ENCODE measurements at regions of chr20 and their contacts with region 1.

Region 1: GRCh38 chr20:53915446-53916172 is 154.8 kb downstream of the BCAS1 start:
- DNase-seq: peak; percentile 64
- H3K4me3 ChIP-seq: peak overlapping the region; percentile 41
- H3K27me3 ChIP-seq: no peaks in the 10 kb centered on the region
- CTCF ChIP-seq: peak; percentile 88

Region 2: GRCh38 chr20:53578492-53579222 is 337.0 kb before region 1 on chr20:
- CTCF ChIA-PET with region 1: interaction called, 23 read pairs
- POLR2A ChIA-PET with region 1: no interaction called
- DNase-seq: peak; percentile 48
- H3K4me3 ChIP-seq: 0 out of 2 replicates have a peak overlapping the region, but pooled peaks have one; percentile 15
- H3K27me3 ChIP-seq: no peaks in the 10 kb centered on the region
- CTCF ChIP-seq: peak; percentile 72

Region 3: GRCh38 chr20:53773792-53774401 is 141.7 kb before region 1 on chr20:
- CTCF ChIA-PET with region 1: interaction called, 16 read pairs
- POLR2A ChIA-PET with region 1: no interaction called
- DNase-seq: peak; percentile 99
- H3K4me3 ChIP-seq: no peak overlapping the region
- H3K27me3 ChIP-seq: no peaks in the 10 kb centered on the region
- CTCF ChIP-seq: no peak

Region 4: DNA sequence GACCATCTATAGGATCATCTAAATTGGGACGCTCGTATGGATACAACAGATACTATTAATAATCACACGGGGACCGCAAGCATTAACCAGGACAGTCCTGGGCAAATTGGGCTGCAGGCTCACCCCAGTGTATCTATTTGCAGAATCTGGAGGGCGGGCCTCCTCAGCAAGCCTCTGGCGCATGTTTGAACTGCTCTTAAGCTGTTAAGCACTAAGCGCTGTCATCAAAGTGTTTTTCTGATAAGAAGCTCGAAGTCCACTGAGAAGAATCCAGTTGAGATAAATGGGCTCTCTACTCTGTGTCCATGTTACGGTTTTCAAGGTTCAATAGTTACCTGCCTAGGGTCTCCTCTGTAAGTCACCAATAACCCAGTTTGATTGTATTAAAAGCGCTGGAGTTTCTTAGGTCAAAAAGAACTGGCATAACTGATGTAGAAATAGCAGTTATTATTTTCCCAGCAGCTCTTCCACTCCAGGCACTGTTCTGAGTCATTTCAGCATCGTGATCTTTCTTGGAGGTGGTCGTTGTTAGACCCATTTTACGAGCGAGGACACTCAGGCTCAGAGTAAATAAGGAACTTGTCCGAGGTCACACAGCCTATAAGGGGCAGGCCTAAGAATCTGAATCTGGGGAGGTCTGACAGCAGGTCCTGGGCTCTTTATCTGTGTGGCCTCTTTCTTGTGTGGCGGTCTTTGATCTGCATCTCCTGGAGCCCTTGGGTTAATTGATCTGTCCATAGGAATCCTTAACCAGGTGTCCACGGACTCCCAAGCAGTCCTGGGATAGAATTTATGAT is 114.6 kb before region 1 on chr20:
- CTCF ChIA-PET with region 1: no interaction called
- POLR2A ChIA-PET with region 1: no interaction called
- DNase-seq: no peak
- H3K4me3 ChIP-seq: no peak overlapping the region
- H3K27me3 ChIP-seq: no peaks in the 10 kb centered on the region
- CTCF ChIP-seq: no peak

Region 5: DNA sequence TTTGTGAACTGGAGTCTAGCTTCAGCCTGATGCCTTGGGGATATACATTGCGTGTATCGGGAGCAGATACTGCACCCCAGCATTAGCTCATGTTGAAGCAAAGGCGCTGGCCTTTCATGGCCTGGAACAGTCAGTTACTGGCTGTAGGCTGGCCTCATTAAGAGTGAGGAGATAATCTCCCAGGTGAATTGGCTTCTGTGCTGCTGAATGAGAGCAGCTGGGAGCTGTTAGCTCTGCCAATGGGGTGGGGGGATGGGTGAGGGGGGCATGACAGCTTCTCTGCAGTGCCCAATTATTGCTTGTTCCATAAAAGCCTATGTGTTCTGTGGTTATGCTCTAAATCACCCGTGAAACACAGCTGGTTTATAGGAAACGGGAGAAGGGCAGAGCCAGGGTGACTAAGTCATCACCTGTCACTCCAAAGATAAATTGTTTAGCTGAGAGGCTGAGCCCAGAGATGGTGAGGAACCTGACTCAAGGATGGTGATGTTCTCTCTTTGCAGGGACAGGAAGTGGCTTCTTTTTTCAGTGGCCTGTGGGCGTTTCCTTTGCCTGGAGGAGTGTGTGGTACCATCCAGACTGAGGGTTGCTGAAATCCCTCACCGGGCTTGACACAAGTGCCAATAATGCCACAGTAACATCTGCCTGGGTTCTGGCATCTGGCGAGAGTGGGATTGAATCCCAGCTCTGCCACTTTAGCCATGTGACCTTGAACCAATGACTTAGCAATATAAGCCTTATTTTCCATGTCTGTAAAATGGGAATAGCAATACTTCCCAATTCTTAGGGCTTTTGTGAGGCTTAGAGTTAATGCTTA is 16.1 kb before region 1 on chr20:
- CTCF ChIA-PET with region 1: interaction called, 11 read pairs
- POLR2A ChIA-PET with region 1: interaction called, 6 read pairs
- DNase-seq: no peak
- H3K4me3 ChIP-seq: no peak overlapping the region
- H3K27me3 ChIP-seq: no peaks in the 10 kb centered on the region
- CTCF ChIP-seq: no peak

Region 6: DNA sequence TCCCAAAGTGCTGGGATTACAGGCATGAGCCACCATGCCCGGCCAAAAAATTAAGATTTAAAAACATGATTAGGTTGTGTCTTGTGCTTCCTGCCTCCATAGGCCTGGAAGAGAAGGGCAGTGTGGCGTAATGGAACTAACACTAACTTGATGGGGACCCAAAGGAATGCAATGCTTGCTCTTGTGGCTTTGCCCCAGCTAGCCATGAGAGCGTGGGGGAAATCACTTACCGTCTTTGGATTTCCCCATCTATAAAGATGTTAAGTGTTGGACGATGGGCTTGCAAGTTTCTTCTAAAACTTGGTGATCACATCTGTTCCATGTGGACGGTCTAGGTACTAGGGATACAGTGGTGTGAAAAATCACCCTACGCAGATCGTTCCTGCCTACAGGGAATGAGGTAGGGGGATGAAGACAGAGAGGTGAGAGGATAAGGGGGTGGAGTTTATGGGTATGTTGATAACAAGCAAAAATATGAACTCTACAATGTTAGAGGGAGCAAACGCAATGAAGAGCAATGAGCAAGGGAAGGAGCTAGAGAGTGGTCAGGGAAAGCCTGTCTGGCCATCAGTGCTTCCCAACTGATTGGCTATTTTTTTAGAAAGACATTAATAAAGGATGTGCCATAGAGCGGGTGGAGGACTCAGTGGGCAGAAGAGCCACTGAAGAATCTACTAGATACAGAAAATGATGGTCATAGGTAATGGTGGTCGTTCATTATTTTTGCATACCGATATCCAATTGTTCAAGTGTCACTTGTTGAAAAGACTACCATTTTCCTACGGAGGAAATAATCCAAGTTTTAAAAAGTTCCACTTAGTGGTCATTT is 10.4 kb before region 1 on chr20:
- CTCF ChIA-PET with region 1: interaction called, 27 read pairs
- POLR2A ChIA-PET with region 1: interaction called, 6 read pairs
- DNase-seq: no peak
- H3K4me3 ChIP-seq: no peak overlapping the region
- H3K27me3 ChIP-seq: no peaks in the 10 kb centered on the region
- CTCF ChIP-seq: no peak

Region 7: DNA sequence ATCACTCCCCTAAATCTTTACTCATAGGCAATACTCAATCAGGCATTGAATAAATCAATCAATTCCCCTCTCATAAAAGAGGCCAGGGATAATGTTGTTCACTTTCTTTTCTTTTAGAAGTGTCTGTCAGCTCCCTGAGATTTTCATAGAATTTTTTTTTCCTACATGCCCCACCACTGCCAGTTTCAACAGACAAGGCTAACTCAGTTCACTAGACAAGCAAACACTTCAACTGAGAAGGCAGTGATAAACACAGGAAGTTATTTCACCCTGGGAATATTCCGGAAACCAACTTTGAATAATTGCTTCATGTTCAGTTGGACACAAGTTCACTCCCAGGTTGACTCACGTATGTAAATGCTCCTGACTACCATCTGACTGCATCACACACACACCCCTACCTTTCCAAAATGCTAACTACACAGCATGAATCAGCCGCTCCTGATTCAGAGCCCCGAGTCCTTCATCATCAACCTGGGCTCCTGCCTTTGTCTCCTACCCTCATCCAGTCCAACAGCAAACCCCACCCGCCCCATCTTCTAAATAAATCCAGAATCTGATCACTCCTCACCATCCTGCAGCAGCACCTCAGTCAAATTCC is 10.9 kb after region 1 on chr20:
- CTCF ChIA-PET with region 1: interaction called, 15 read pairs
- POLR2A ChIA-PET with region 1: no interaction called
- DNase-seq: peak; percentile 84
- H3K4me3 ChIP-seq: no peak overlapping the region
- H3K27me3 ChIP-seq: no peaks in the 10 kb centered on the region
- CTCF ChIP-seq: no peak

Region 8: GRCh38 chr20:53939572-53940359 is 24.2 kb after region 1 on chr20:
- CTCF ChIA-PET with region 1: interaction called, 32 read pairs
- POLR2A ChIA-PET with region 1: no interaction called
- DNase-seq: peak; percentile 80
- H3K4me3 ChIP-seq: no peak overlapping the region
- H3K27me3 ChIP-seq: no peaks in the 10 kb centered on the region
- CTCF ChIP-seq: peak; percentile 74

Region 9: DNA sequence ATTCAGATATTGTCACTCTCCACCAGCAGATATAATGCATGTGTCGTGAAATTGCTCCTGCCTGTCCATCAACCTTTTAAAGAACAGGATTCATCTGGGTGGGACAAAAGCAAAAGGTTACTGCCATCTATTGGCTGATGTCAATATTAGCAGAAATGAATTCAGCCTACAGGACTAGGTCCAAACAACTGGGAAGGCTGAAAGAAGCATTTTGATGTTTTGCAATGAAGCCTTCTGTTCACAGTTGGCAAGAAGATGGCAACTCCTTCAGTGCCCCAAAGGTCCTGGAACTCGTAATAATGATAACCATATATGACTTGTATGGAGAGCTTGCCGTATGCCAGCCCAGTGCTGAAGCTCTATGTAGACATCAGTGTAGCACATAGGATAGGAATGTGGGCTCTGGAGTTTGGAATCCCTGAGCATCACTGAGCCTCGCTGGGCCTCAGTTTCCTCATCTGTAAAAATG is 147.2 kb after region 1 on chr20:
- CTCF ChIA-PET with region 1: no interaction called
- POLR2A ChIA-PET with region 1: no interaction called
- DNase-seq: no peak
- H3K4me3 ChIP-seq: no peak overlapping the region
- H3K27me3 ChIP-seq: no peaks in the 10 kb centered on the region
- CTCF ChIP-seq: peak; percentile 65

Measured in BJ (cell line).